MCF 10A (cell line): ENCODE measurements at regions of chr5 and their contacts with region 1.

Region 1: DNA sequence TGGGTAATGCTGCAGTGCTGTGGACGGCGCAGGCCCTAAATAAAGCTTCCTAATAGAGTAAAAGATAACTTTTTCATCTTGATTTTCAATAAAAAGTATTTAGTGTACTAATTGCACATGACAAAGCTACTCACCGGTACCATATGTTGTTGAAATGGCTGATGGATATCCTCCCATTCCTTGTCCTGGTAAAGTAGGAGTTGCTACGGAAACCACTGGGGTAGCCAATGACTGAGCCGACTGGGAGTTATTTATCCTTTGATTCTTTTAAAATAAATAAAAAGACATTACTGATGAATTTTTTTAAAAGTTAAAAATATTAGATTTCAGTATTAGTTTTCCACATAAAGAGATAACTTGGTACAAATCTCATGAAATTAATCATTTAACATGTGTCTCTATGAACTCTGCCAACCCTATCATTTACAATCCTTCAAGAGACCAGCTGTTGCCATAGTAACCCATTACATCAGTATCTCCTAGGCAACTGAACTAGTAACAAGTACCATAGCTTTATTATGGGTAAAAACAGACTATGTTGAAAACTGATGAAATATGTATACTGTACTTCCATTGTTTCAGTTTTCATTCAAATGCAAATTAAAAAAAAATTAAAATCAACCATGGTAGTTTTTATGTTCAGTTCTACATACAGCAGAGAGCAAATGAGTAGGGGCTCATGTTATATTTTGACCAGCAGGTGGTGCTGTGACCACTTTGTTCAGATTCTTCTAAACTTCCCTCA is 153.7 kb downstream of the MEF2C start:
- DNase-seq: peak; percentile 73
- H3K4me3 Mint-ChIP-seq: no peak overlapping the region
- H3K27ac Mint-ChIP-seq: no peak overlapping the region
- H3K4me1 Mint-ChIP-seq: no peaks in the 10 kb centered on the region
- H3K27me3 Mint-ChIP-seq: peaks cover 70% of the 10 kb centered on the region
- CTCF ChIP-seq: peak; percentile 59

Region 2: DNA sequence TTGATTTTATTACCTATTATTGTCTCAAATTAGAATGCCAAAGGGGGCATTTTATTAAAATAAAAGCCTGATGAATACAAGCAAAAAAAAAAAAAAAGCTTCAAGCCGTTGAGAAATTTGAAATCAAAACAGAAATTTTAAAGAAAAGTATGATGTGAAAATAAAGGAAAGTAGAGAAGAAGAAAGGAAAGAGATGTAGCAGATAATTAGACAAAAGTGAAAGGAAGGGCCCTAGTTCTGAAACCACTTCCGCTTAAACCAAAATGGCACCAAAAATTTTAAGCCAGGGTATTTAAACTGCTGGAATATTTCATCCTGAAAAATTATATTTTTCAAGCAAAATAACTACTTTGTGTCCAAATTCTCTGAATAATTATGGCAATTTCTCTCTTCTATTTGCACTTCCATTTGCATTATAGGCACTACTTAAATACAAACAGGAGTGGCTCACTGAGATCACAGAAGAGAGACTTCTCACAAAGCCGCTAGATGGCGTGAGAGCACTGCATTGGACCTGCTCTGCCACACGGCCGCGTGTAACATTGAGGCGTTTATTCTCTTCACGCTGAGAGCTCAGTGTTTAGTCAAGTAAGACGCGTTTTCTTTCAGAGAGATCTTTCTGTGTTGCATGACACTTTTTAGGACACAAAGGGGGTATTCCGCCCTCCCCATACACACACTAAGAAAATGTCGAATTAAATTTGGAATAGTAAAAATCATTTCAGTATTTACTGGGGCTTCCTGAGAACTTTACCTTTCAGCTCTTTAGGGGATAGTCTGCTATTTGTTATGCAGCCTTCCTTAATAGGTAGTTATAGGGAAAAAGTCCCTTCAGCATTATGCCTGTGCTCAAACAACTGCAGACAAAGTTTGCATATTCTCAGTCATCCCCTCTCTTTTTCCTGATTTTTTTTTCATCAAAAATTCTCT is 948.2 kb before region 1 on chr5:
- CTCF ChIA-PET with region 1: interaction called, 23 read pairs
- POLR2A ChIA-PET with region 1: no interaction called
- intact Hi-C with region 1: loop called (anchors 1 kb)
- DNase-seq: peak; percentile 86
- H3K4me3 Mint-ChIP-seq: no peak overlapping the region
- H3K27ac Mint-ChIP-seq: no peak overlapping the region
- H3K4me1 Mint-ChIP-seq: no peaks in the 10 kb centered on the region
- H3K27me3 Mint-ChIP-seq: peaks cover 73% of the 10 kb centered on the region
- CTCF ChIP-seq: peak; percentile 90

Region 3: DNA sequence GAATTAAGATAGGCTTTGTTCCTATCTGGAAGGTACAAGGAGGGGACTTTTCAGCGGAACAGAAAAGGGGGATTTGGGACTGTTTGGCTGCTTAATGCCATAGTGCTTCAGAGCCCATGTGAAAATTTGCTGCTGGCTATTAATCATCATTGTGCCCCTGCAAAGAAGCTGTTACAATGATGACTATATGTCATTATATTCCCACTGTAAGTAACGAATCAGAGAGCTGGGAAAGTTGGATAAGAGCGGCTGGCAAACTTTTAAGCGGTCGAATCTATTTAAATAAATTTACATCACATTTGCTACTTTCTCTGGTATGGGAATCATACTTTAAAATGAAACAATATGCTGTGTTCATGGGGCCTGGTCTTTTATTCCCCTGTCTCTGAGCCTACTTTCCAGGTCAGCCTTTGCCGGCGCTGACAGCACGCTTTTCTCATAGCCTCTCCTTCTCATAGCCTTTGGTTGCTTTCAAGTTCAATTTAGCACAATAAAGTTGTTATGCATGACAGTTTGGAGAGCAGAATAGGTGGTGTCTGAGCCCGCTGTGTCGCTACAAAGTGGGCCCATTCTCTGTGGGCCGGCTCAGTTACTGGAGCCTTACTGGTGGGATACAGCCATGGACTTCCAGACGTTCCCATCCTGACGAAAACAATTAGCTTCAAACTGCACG is 189.4 kb before region 1 on chr5:
- CTCF ChIA-PET with region 1: no interaction called
- POLR2A ChIA-PET with region 1: no interaction called
- intact Hi-C with region 1: no loop called
- DNase-seq: no peak
- H3K4me3 Mint-ChIP-seq: no peak overlapping the region
- H3K27ac Mint-ChIP-seq: no peak overlapping the region
- H3K4me1 Mint-ChIP-seq: no peaks in the 10 kb centered on the region
- H3K27me3 Mint-ChIP-seq: peaks cover 52% of the 10 kb centered on the region
- CTCF ChIP-seq: no peak

Region 4: DNA sequence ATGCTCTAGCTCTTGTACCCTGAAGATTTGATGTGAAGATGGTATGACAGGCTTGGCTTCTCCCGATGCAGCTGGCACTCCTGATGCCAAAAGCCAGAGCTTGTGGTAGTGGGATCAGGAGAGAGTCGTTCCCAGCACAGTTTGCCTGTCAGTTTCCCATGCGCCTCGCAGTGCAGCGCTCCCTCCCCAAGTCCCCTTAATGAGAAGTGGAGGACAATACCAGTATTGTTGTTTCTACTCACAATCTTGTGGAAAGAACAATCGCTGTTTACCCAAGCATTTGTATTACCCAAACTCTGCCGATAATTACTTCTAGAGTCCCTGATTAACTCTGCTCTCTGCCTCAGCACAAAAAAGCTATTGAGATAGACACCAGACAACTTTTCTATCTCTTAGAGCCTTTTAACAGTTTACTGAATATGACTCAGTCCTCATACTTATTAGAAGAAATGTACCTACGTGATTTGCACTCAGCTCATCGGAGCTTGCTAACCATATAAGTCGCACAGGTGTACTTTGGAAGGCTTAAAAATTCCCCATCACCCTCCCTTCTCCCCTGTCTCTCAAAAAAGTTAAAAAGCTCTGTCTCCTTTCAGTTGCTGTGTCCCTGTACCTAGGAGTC is 177.4 kb before region 1 on chr5:
- CTCF ChIA-PET with region 1: no interaction called
- POLR2A ChIA-PET with region 1: no interaction called
- intact Hi-C with region 1: no loop called
- DNase-seq: no peak
- H3K4me3 Mint-ChIP-seq: no peak overlapping the region
- H3K27ac Mint-ChIP-seq: no peak overlapping the region
- H3K4me1 Mint-ChIP-seq: no peaks in the 10 kb centered on the region
- H3K27me3 Mint-ChIP-seq: peaks cover 76% of the 10 kb centered on the region
- CTCF ChIP-seq: no peak

Region 5: GRCh38 chr5:88634014-88634413 is 95.2 kb before region 1 on chr5:
- CTCF ChIA-PET with region 1: no interaction called
- POLR2A ChIA-PET with region 1: no interaction called
- intact Hi-C with region 1: no loop called
- DNase-seq: no peak
- H3K4me3 Mint-ChIP-seq: no peak overlapping the region
- H3K27ac Mint-ChIP-seq: no peak overlapping the region
- H3K4me1 Mint-ChIP-seq: no peaks in the 10 kb centered on the region
- H3K27me3 Mint-ChIP-seq: peaks cover 39% of the 10 kb centered on the region
- CTCF ChIP-seq: no peak

Region 6: DNA sequence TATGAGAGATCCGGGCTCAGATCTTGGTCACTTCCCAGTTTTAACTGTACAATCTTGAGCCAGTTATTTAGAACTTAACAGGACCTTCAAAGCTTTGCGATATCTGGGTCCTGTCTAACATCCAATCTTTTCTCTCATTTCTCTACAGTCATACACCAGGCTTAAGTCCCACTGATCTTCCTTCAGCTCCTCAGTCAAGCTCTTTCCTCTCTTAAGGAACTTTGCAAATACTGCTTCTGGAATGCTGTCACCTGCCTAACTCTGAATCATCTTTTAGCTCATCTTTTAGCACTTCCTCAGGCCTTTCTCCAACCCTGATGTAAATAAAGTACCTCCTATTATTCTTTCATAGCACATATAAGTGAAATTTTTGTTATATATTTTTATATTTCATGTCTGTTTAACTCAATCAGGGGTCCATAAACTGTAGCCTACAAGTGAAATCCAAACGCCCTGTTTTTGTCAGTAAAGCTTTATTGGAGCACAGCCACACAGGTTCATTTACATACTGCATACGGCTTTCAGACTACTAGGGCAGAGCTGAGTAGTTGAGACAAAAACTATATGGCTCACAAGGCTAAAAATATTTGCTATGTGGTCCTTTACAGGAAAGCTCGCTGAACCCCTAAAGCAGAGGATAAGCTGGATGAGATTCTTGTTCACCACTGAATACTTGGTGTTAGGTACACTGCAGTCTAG is 90.2 kb after region 1 on chr5:
- CTCF ChIA-PET with region 1: interaction called, 11 read pairs
- POLR2A ChIA-PET with region 1: no interaction called
- intact Hi-C with region 1: no loop called
- DNase-seq: no peak
- H3K4me3 Mint-ChIP-seq: no peak overlapping the region
- H3K27ac Mint-ChIP-seq: no peak overlapping the region
- H3K4me1 Mint-ChIP-seq: no peaks in the 10 kb centered on the region
- H3K27me3 Mint-ChIP-seq: peaks cover 90% of the 10 kb centered on the region
- CTCF ChIP-seq: no peak

Region 7: GRCh38 chr5:89729623-89730301 is 1000.5 kb after region 1 on chr5:
- CTCF ChIA-PET with region 1: interaction called, 13 read pairs
- POLR2A ChIA-PET with region 1: no interaction called
- intact Hi-C with region 1: loop called (anchors 1 kb)
- DNase-seq: peak; percentile 8
- H3K4me3 Mint-ChIP-seq: no peak overlapping the region
- H3K27ac Mint-ChIP-seq: no peak overlapping the region
- H3K4me1 Mint-ChIP-seq: peaks cover 12% of the 10 kb centered on the region
- H3K27me3 Mint-ChIP-seq: no peaks in the 10 kb centered on the region
- CTCF ChIP-seq: peak; percentile 22

Region 8: GRCh38 chr5:90251447-90251846 is 1522.2 kb after region 1 on chr5:
- CTCF ChIA-PET with region 1: interaction called, 10 read pairs
- POLR2A ChIA-PET with region 1: no interaction called
- intact Hi-C with region 1: no loop called
- DNase-seq: no peak
- H3K4me3 Mint-ChIP-seq: no peak overlapping the region
- H3K27ac Mint-ChIP-seq: no peak overlapping the region
- H3K4me1 Mint-ChIP-seq: no peaks in the 10 kb centered on the region
- H3K27me3 Mint-ChIP-seq: no peaks in the 10 kb centered on the region
- CTCF ChIP-seq: no peak

Region 9: GRCh38 chr5:90386099-90386710 is 1656.9 kb after region 1 on chr5:
- CTCF ChIA-PET with region 1: interaction called, 76 read pairs
- POLR2A ChIA-PET with region 1: no interaction called
- intact Hi-C with region 1: loop called (anchors 2 kb)
- DNase-seq: peak; percentile 32
- H3K4me3 Mint-ChIP-seq: no peak overlapping the region
- H3K27ac Mint-ChIP-seq: no peak overlapping the region
- H3K4me1 Mint-ChIP-seq: no peaks in the 10 kb centered on the region
- H3K27me3 Mint-ChIP-seq: no peaks in the 10 kb centered on the region
- CTCF ChIP-seq: peak; percentile 36